CD4-positive, alpha-beta T cell (primary cell): ENCODE measurements at regions of chr19 and their contacts with region 1.

Region 1: GRCh38 chr19:34178274-34178610 is 5.9 kb downstream of the LSM14A start:
- DNase-seq: peak in 3 of 14 experiments; percentile 32 to 54 (median 53)
- ATAC-seq: peak; percentile 75
- H3K4me3 ChIP-seq: peak overlapping the region; percentile 6
- H3K4me3 Mint-ChIP-seq: peak overlapping the region; percentile 75
- H3K27ac ChIP-seq: no peak overlapping the region
- H3K27ac Mint-ChIP-seq: peak overlapping the region; percentile 70
- H3K4me1 ChIP-seq: peaks cover 49% of the 10 kb centered on the region
- H3K4me1 Mint-ChIP-seq: peaks cover 94% of the 10 kb centered on the region
- H3K27me3 ChIP-seq: no peaks in the 10 kb centered on the region
- H3K27me3 Mint-ChIP-seq: no peaks in the 10 kb centered on the region
- CTCF ChIP-seq: no peak

Region 2: DNA sequence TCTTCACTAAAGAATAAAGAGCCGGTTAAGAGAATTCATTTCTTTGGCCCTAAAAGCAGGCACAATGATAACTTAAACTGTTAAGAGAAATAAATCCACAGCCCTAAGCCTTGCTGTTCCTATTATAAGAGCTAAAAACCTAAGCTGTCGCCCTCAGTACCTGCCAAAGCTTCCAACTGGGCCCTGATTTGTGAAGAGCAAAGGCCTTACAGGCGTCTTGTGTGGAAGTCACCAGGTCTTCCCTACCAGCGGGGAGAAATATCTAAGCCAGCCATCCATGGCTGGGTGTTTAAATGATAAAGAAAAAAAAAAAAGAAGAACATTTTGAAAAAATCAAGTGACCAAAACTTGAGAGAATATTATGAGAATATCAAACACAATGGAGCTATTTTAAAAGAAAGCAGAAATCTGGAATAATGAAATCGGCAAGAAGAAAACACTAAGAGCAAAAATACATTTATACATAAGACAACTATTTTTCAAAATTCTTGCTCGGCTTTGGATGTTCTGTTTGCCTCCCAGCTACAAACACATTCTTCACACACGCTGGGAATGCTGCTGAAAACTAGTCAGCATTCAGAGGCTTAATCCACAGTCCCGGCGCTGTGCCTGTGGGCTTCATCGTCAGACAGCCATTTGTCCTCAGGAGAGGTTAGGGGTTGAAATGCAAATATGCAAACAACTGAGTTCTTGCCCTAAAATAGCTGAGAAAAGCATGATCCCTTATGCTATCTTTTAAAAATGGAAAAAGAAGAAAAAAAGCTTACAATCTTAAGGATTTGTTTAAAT is 95.8 kb before region 1 on chr19:
- CTCF ChIA-PET with region 1: no interaction called
- POLR2A ChIA-PET with region 1: no interaction called
- intact Hi-C with region 1: no loop called
- DNase-seq: no peak
- ATAC-seq: no peak
- H3K4me3 ChIP-seq: no peak overlapping the region
- H3K4me3 Mint-ChIP-seq: no peak overlapping the region
- H3K27ac ChIP-seq: no peak overlapping the region
- H3K27ac Mint-ChIP-seq: no peak overlapping the region
- H3K4me1 ChIP-seq: no peaks in the 10 kb centered on the region
- H3K4me1 Mint-ChIP-seq: no peaks in the 10 kb centered on the region
- H3K27me3 ChIP-seq: peaks cover 0 to 6% of the 10 kb centered on the region in 2 experiments
- H3K27me3 Mint-ChIP-seq: peaks cover 27% of the 10 kb centered on the region
- CTCF ChIP-seq: no peak

Region 3: DNA sequence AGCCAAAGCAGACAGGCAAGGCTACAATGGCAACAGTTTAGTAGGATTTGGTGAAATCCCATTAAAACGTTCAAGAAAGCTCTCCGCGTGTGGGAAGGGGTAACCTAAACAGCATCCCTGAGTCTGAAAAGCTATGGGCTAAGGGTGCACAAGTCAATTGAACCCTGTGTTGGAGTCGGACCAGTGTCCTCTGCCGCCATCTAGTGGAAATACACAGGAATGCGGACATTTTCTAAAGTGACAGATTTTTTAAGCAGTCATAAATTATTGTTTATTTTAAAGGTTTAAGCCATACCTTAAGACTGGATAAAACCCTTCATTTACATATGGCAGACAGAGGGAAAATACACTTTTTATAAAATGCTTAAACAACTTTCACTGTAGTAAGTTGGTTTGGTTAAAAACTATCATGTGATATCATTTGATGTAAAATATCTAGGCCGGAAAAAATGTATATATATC is 32.5 kb before region 1 on chr19:
- CTCF ChIA-PET with region 1: no interaction called
- POLR2A ChIA-PET with region 1: no interaction called
- intact Hi-C with region 1: no loop called
- DNase-seq: peak; percentile 23 to 80 (median 40)
- ATAC-seq: peak; percentile 78
- H3K4me3 ChIP-seq: no peak overlapping the region
- H3K4me3 Mint-ChIP-seq: no peak overlapping the region
- H3K27ac ChIP-seq: no peak overlapping the region
- H3K27ac Mint-ChIP-seq: no peak overlapping the region
- H3K4me1 ChIP-seq: no peaks in the 10 kb centered on the region
- H3K4me1 Mint-ChIP-seq: no peaks in the 10 kb centered on the region
- H3K27me3 ChIP-seq: no peaks in the 10 kb centered on the region
- H3K27me3 Mint-ChIP-seq: no peaks in the 10 kb centered on the region
- CTCF ChIP-seq: peak; percentile 91

Region 4: GRCh38 chr19:34189917-34190425 is 11.7 kb after region 1 on chr19:
- CTCF ChIA-PET with region 1: interaction called, 4 read pairs
- POLR2A ChIA-PET with region 1: interaction called, 9 read pairs
- intact Hi-C with region 1: loop called in 1 of 2 experiments (anchors 2 kb)
- DNase-seq: no peak
- ATAC-seq: no peak
- H3K4me3 ChIP-seq: no peak overlapping the region
- H3K4me3 Mint-ChIP-seq: peak overlapping the region; percentile 7
- H3K27ac ChIP-seq: no peak overlapping the region
- H3K27ac Mint-ChIP-seq: peak overlapping the region; percentile 9
- H3K4me1 ChIP-seq: peaks cover 22% of the 10 kb centered on the region
- H3K4me1 Mint-ChIP-seq: peaks cover 77% of the 10 kb centered on the region
- H3K27me3 ChIP-seq: no peaks in the 10 kb centered on the region
- H3K27me3 Mint-ChIP-seq: no peaks in the 10 kb centered on the region
- CTCF ChIP-seq: no peak

Region 5: DNA sequence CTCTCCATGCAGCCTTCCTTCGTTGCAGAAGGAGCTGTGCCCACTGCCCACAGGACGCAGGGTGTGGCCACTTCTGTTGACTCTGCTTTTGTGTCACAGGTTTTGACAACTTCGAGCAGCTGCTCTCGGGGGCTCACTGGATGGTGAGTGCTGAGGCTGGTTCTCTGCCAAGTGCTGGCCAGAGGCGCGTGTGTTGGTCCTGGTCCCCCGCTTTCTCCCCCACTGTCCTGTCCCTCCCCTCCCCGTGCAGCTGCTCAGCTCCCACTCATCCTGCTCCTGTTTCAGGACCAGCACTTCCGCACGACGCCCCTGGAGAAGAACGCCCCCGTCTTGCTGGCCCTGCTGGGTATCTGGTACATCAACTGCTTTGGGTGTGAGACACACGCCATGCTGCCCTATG is 215.4 kb after region 1 on chr19:
- CTCF ChIA-PET with region 1: no interaction called
- POLR2A ChIA-PET with region 1: no interaction called
- intact Hi-C with region 1: no loop called
- DNase-seq: no peak
- ATAC-seq: no peak
- H3K4me3 ChIP-seq: no peak overlapping the region
- H3K4me3 Mint-ChIP-seq: no peak overlapping the region
- H3K27ac ChIP-seq: no peak overlapping the region
- H3K27ac Mint-ChIP-seq: no peak overlapping the region
- H3K4me1 ChIP-seq: no peaks in the 10 kb centered on the region
- H3K4me1 Mint-ChIP-seq: no peaks in the 10 kb centered on the region
- H3K27me3 ChIP-seq: no peaks in the 10 kb centered on the region
- H3K27me3 Mint-ChIP-seq: no peaks in the 10 kb centered on the region
- CTCF ChIP-seq: no peak